PC-9 (cell line): ENCODE measurements at regions of chr9 and their contacts with region 1.

Region 1: DNA sequence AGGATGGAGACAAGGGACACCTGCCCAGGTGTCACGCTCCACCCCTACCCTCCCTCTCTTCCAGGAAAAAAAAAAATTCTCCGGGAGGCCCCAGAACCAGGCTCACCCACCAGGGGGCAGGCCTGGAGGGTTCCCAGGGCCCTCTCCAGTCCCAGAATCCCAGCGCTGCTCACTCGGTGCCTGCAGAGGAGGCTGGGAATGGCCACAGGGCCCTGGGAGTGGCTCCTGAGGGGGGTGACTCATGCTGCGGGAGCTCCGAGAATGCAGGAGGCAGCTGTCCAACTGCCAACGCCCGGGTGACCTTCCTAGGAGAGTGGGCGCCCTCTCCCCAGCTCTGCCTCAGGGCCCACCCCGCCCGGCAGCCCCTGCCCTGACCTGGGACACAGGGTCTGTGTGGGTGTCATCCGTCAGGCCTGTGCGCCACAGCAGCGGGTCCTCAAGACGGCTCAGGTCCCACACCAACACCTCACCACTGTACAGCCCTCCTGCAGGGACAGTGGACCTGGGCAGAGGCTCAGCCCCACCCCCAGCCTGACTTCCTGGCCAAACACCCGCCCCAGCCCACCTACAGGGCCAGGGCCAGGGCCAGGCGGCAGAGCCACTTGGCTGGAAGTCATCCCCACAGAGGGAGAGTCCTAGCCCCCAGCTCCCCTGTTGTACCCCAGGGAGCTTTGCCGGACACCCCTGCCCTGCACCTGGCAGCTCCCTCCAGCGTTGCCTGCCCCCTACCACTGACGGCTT is 21.2 kb downstream of the DYNC2I2 start:
- DNase-seq: peak; percentile 95 to 100
- H3K4me3 ChIP-seq: peak overlapping the region; percentile 50
- H3K27ac ChIP-seq: peak overlapping the region; percentile 93
- H3K4me1 ChIP-seq: peaks cover 32% of the 10 kb centered on the region
- H3K27me3 ChIP-seq: no peaks in the 10 kb centered on the region
- CTCF ChIP-seq: peak; percentile 92

Region 2: GRCh38 chr9:128656416-128657343 is 21.2 kb after region 1 on chr9 and contains the start of gene DYNC2I2:
- CTCF ChIA-PET with region 1: no interaction called
- POLR2A ChIA-PET with region 1: no interaction called
- intact Hi-C with region 1: loop called (anchors 2 kb)
- DNase-seq: peak; percentile 80 to 97
- H3K4me3 ChIP-seq: peak within 1 kb of the TSS; percentile 99
- H3K27ac ChIP-seq: peak within 1 kb of the TSS; percentile 98
- H3K4me1 ChIP-seq: peaks cover 8% of the 10 kb centered on the region; the same call in 1 of the 2 replicates
- H3K27me3 ChIP-seq: no peaks in the 10 kb centered on the region
- CTCF ChIP-seq: no peak
- total RNA-seq, gene DYNC2I2: 225 and 263 TPM in 2 replicates

Region 3: GRCh38 chr9:128688512-128689292 is 53.2 kb after region 1 on chr9 and contains the start of gene SET:
- CTCF ChIA-PET with region 1: interaction called, 3 read pairs
- POLR2A ChIA-PET with region 1: interaction called, 21 read pairs
- intact Hi-C with region 1: loop called (anchors 1 kb)
- DNase-seq: peak; percentile 71 to 98
- H3K4me3 ChIP-seq: peak within 1 kb of the TSS; percentile 80
- H3K27ac ChIP-seq: peak within 1 kb of the TSS; percentile 78
- H3K4me1 ChIP-seq: peaks cover 47% of the 10 kb centered on the region
- H3K27me3 ChIP-seq: no peaks in the 10 kb centered on the region
- CTCF ChIP-seq: no peak
- total RNA-seq, gene SET: 539 and 738 TPM in 2 replicates

Region 4: DNA sequence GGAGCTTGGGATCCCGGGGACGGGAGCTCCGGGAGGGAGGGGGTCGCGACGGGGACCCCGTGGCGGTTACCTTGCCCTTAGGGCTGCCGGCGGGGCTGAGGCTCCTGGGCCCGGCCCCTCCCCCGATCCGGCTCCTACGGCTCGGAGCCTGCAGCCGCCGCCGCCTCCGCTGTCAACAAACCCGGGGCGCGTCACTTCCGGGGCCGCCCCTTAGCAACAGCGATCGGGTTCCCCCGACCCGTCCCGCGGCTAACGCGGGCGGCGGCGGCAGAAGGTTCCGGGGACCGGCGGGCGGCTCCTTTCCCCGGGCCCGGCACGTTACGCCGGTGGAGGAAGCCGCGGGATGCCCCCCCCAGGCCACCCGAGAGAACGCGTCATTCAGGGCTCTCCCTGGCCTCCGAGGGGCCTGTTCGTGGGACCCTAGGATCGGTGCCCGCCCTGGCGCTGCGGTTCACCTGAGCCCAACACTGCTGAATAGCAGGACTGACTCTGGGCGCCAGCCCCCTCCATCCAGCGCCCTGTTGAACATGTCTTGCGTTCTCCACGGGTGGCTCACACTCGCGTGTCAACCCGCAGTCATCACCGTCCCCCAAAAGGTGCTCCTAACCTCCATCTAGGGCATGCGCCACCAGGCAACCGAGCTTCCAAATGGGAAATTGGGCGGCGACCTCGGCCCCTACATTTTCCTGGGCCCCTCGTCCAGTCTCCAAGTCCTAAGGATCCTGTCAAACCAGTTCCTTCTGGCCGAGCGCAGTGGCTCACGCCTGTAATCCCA is 136.5 kb after region 1 on chr9 and contains the start of gene ZER1:
- CTCF ChIA-PET with region 1: no interaction called
- POLR2A ChIA-PET with region 1: no interaction called
- intact Hi-C with region 1: loop called (anchors 1 kb)
- DNase-seq: peak; percentile 77 to 95
- H3K4me3 ChIP-seq: peak within 1 kb of the TSS; percentile 80
- H3K27ac ChIP-seq: peak within 1 kb of the TSS; percentile 74
- H3K4me1 ChIP-seq: peaks cover 11% of the 10 kb centered on the region; the same call in 1 of the 2 replicates
- H3K27me3 ChIP-seq: no peaks in the 10 kb centered on the region
- CTCF ChIP-seq: no peak
- total RNA-seq, gene ZER1: 65.2 and 70.0 TPM in 2 replicates

Region 5: DNA sequence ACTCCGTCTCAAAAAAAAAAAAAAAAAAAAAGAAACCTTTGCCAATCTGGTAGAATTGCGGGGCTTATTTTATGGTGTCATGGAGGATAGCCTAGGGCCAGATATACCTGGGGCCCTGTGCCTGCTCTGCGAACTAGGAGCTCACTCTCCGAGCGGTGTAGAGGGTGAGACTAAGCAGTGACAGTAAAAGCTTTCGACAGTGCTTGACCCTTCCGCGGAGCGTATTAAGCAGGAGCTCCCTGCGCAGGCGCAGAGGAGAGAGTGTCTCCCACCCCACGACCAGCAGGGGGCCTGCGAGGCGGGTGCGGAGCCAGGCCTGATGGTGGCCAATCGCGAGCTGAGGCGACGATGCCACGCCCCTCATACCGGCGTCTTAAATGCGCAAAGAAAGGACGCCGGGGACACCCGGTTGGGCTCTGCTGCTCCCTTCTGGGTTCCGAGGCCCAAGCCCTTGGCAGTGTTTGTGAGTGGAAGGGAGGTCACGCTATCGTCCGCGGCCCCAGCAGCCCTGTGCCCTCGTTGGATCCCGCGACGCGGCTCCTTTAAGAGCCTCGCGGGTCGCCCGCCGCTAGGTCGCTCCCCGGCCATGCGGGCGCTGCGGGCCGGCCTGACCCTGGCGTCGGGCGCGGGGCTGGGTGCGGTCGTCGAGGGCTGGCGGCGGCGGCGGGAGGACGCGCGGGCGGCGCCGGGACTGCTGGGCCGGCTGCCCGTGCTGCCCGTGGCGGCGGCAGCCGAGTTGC is 182.8 kb after region 1 on chr9 and contains the start of gene ENDOG:
- CTCF ChIA-PET with region 1: no interaction called
- POLR2A ChIA-PET with region 1: interaction called, 9 read pairs
- intact Hi-C with region 1: loop called (anchors 1 kb)
- DNase-seq: peak; percentile 90 to 100
- H3K4me3 ChIP-seq: peak within 1 kb of the TSS; percentile 58
- H3K27ac ChIP-seq: no peak within 1 kb of the TSS
- H3K4me1 ChIP-seq: peaks cover 7% of the 10 kb centered on the region; the same call in 1 of the 2 replicates
- H3K27me3 ChIP-seq: no peaks in the 10 kb centered on the region
- CTCF ChIP-seq: peak; percentile 90
- total RNA-seq, gene ENDOG: 28.6 and 47.9 TPM in 2 replicates

Region 6: GRCh38 chr9:129028192-129028957 is 392.9 kb after region 1 on chr9 and contains the start of gene SH3GLB2:
- CTCF ChIA-PET with region 1: no interaction called
- POLR2A ChIA-PET with region 1: no interaction called
- intact Hi-C with region 1: loop called (anchors 5 kb)
- DNase-seq: peak; percentile 73 to 98
- H3K4me3 ChIP-seq: peak within 1 kb of the TSS; percentile 63
- H3K27ac ChIP-seq: peak within 1 kb of the TSS; percentile 48
- H3K4me1 ChIP-seq: peaks cover 47% of the 10 kb centered on the region
- H3K27me3 ChIP-seq: no peaks in the 10 kb centered on the region
- CTCF ChIP-seq: peak; percentile 86
- total RNA-seq, gene SH3GLB2: 184 and 213 TPM in 2 replicates